ENCODE measurements at regions of chr2 and their contacts with region 1.

Region 1: DNA sequence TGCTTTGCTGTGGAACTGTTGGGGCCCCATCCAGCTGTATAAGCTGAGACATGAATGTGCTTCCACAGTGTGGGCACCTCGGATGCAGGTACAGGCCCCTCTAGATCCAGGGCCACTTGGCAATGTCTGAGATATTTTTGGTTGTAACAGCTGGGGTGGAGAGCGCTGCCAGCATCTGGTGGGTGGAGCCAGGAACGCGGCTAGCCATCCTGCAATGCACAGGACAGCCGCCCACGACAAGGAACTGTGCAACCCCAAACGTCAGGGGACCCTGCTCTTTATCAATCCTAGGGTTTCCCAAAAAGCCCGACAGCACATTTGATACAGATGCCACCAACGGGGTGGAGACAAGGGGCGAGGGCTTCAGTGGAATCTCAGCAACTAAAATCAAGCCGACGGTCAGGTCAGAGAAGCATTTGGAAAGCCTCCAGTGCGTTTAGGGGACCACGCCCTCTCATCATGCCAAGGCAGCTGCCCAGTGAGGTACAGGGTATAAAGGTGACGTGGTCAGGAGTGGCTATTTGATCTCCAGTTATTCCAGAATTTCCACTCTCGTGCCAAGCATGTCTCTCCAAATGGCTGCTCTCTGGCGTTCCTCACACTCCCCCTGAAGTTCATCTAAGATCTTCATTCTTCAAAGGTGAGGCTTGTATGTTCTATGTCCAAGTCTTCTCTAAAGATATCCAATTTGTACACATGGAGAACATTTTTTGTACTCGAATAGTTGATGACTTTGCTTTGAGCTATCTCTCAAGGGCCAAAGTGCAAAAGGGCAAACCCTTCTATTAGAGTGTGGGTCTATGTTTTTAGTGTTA is 55.7 kb downstream of the LRRFIP1 start:
- DNase-seq: no peak

Region 2: DNA sequence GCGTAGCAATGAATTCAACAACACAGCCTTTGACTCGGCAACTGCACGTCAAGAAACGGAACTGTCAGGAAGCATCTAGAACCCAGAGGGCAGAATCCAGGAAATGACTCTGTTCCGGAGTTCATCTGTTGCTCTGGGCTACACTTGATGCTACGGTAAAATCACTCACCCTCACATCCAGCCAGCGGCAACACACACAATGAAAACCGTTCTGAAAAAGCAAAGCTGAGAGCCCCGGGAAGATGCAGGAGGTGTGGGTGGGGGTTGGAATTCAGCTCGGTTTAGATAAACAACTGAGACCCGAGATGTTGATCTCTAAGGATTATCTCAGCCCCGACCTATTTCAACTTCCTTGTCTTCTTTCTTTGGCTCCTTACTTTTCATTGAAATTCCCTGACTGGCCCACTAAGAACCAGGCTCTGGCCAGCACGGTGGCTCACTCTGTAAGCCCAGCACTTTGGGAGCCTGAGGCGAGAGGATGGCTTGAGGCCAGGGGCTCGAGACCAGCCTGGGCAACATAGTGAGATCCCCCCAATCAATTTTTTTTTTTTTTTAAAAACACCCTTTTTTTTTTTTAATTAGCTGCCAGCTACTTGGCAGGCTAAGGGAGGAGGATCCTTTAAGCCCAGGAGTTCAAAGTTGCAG is 79.2 kb before region 1 on chr2:
- in situ Hi-C with region 1: loop called (anchors 5 kb)
- DNase-seq: no peak

Region 3: DNA sequence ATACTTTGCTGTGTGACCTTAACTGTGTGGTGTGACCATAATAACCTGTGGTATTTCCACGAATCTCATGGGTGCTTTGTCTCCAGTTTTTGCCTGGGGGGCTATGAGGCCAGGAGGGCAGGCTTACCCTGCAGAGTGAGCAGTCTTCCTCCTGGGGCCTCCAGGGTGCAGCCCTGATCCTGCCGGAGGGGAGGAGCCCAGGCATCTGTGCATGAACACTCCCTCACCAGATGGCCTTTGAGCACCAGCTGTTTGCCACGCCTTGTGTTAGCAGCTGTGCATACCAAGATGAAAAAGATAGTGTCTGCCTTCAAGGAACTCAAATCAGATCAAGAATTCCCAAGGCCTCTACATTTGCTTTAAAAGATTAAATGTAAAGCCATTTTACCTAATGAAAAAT is 40.5 kb after region 1 on chr2:
- in situ Hi-C with region 1: no loop called
- DNase-seq: no peak